HEK293 (cell line): ENCODE measurements at regions of chrX and their contacts with region 1.

Region 1: GRCh38 chrX:120380699-120381098 is 18.8 kb downstream of the ATP1B4 start:
- H3K4me3 ChIP-seq: no peak overlapping the region
- H3K27ac ChIP-seq: no peak overlapping the region
- H3K4me1 ChIP-seq: no peaks in the 10 kb centered on the region
- CTCF ChIP-seq: no peak

Region 2: DNA sequence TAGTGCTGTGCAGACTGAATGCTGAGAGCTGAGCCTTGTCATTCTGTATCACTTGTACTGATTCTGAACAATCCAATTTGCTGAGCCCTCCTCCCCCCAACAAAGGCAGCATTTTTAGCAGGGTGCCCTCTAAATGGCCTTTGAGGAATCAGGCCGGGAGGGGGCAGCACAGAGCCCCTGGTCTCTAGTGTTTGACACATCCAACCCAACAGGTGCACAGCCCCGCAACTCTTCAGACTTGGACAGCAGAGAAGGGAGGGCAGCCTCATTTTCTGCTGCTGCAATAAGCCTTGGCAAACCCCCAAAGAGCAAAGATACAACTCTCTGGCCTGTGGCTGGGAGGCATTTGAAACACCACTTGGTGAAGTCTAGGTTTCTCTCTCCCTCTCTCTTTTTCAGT is 15.4 kb before region 1 on chrX:
- CTCF ChIA-PET with region 1: interaction called, 16 read pairs
- POLR2A ChIA-PET with region 1: no interaction called
- H3K4me3 ChIP-seq: no peak overlapping the region
- H3K27ac ChIP-seq: no peak overlapping the region
- H3K4me1 ChIP-seq: no peaks in the 10 kb centered on the region
- CTCF ChIP-seq: peak; percentile 22; the same call in 1 of the 2 replicates

Region 3: DNA sequence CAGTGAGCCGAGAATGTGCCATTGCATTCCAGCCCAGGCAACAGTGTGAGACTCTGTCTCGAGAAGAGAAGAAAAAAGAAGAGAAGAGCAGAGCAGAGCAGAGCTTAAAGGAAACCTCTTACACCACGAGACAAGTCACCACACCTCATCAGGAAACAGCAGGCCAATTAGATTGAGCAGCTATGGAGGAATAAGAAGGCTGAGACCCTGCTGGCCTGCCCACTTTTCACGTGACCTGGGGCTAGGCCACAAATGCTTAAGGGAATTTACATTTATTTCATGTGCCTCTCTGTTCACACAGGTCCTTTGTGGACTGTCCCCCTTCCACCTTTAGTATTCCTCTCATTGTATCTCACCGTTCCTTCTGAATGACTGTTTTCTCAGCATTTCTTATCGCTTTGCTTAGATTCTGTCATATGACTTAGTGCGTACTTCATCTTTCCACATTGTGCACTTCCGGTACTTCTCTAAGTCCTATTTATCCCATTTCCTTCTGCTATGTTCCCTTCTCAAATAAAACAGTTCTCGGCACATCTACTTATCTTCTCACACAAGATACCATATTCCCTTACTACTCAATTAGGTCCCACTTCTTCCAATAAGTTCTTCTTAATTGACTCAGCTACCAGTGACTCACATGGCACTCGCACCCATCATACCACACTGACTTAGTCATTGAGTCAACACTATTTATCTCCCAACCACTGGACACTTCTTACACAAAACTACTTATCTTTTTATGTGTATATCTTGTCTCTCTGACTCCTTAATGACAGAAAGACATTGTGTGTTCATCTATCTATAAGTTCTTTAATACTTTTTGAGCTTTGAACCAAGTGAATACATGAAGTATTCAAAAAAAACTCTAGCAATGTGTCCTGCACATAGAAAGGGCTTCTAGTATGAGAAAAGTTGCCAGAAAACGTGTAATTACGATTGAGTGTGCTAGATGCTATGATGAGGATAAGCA is 169.1 kb after region 1 on chrX:
- CTCF ChIA-PET with region 1: no interaction called
- POLR2A ChIA-PET with region 1: no interaction called
- H3K4me3 ChIP-seq: no peak overlapping the region
- H3K27ac ChIP-seq: peak overlapping the region; percentile 12; the same call in 1 of the 2 replicates
- H3K4me1 ChIP-seq: 0 out of 2 replicates have a peak, but pooled peaks cover 5% of the 10 kb centered on the region
- CTCF ChIP-seq: no peak